ENCODE measurements at regions of chr11 and their contacts with region 1.

Region 1: GRCh38 chr11:122633219-122633829 is 22.2 kb upstream of the UBASH3B start:
- DNase-seq: peak in 1 of 2 experiments; percentile 26
- H3K4me3 ChIP-seq: no peak overlapping the region
- H3K4me1 ChIP-seq: no peaks in the 10 kb centered on the region
- H3K27me3 ChIP-seq: no peaks in the 10 kb centered on the region

Region 2: GRCh38 chr11:122711831-122712381 is 78.6 kb after region 1 on chr11:
- in situ Hi-C with region 1: no loop called
- DNase-seq: no peak
- H3K4me3 ChIP-seq: no peak overlapping the region
- H3K4me1 ChIP-seq: no peaks in the 10 kb centered on the region
- H3K27me3 ChIP-seq: 0 out of 2 replicates have a peak, but pooled peaks cover 2% of the 10 kb centered on the region

Region 3: DNA sequence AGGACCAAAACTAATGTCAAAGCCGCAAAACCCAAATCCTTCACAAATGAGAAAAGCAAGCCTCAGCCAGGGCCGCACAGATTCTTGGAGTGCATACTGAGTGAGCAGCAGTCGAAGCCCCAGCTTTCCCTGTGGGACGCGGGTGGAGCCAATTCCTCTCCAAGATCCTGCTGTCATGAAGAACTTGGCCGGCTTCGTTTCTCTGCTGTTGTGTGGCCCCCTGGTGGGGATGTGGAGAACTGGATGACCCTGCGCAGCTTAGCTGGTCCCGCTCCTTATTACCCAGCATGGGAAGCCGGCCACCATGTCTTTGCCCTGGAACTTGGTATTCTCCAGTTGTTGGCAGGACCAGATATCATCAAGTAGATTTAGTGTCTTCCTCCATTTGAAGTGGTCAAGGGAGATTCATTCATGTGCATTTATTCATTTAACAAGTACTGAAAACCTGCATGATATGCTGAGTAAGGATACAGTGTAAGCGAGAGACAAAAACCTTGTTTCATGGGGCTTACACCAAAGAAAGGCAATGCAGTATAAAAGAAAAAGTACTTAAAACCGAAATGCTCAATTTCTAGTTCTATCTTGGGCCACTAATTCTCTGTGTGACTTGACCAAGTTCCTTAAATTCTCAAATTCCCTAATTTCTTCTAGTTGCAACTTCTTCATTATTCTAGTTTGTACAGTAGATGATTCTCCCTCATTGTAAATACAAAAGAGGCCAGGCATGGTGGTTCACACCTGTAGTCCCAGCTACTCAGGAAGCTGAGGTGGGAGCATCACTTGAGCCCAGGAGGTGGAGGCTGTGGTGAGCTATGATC is 148.3 kb after region 1 on chr11:
- in situ Hi-C with region 1: loop called (anchors 10 kb)
- DNase-seq: peak; percentile 59 to 88
- H3K4me3 ChIP-seq: no peak overlapping the region
- H3K4me1 ChIP-seq: no peaks in the 10 kb centered on the region
- H3K27me3 ChIP-seq: peaks cover 3% of the 10 kb centered on the region; the same call in 1 of the 2 replicates